Activated CD4-positive, alpha-beta T cell treated with anti-CD3 and anti-CD28 coated beads for 36 hours (primary cell): ENCODE measurements at regions of chr4 and their contacts with region 1.

Region 1: GRCh38 chr4:89482248-89482647 is 174.6 kb upstream of the GPRIN3 start:
- DNase-seq: no peak
- ATAC-seq: peak; percentile 80
- H3K4me3 Mint-ChIP-seq: no peak overlapping the region
- H3K27ac Mint-ChIP-seq: no peak overlapping the region
- H3K4me1 Mint-ChIP-seq: peaks cover 4% of the 10 kb centered on the region
- H3K27me3 Mint-ChIP-seq: peaks cover 3% of the 10 kb centered on the region

Region 2: GRCh38 chr4:89509708-89510281 is 27.5 kb after region 1 on chr4:
- CTCF ChIA-PET with region 1: interaction called, 3 read pairs
- POLR2A ChIA-PET with region 1: no interaction called
- intact Hi-C with region 1: loop called in 1 of 2 experiments (anchors 2 kb)
- DNase-seq: peak; percentile 26
- ATAC-seq: peak; percentile 99
- H3K4me3 Mint-ChIP-seq: no peak overlapping the region
- H3K27ac Mint-ChIP-seq: no peak overlapping the region
- H3K4me1 Mint-ChIP-seq: peaks cover 16% of the 10 kb centered on the region
- H3K27me3 Mint-ChIP-seq: peaks cover 14% of the 10 kb centered on the region

Region 3: DNA sequence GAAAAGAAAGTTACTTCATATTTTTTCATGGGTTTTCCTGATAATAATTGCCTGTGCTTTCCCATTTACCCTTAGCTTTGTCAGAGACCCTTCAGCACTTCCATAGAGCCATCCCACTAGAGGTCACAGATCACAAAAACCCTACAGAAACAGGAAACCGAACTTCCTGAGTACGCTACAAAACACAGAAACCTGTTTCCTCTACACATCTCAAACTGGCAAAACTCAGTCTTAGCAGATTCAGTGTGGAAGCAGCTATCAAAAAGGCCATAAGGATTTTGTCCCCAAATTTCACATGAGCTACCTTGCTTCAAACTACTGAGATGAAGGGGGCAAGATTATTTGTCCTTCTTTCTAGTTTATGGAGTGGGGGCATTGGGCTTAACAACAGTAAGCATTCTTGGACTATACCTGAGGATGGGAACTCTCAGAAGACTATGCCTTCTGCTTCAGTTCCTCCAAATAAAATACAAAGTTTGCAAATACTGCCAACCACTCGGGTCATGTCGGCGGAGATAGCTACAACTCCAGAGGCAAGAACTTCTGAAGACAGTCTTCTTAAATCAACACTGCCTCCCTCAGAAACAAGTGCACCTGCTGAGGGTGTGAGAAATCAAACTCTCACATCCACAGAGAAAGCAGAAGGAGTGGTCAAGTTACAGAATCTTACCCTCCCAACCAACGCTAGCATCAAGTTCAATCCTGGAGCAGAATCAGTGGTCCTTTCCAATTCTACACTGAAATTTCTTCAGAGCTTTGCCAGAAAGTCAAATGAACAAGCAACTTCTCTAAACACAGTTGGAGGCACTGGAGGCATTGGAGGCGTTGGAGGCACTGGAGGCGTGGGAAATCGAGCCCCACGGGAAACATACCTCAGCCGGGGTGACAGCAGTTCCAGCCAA is 412.7 kb after region 1 on chr4 and contains the start of gene MMRN1:
- CTCF ChIA-PET with region 1: interaction called, 3 read pairs
- POLR2A ChIA-PET with region 1: no interaction called
- intact Hi-C with region 1: loop called (anchors 5 to 10 kb)
- DNase-seq: peak; percentile 22
- ATAC-seq: peak; percentile 53
- H3K4me3 Mint-ChIP-seq: peak within 1 kb of the TSS; percentile 58
- H3K27ac Mint-ChIP-seq: peak within 1 kb of the TSS; percentile 86
- H3K4me1 Mint-ChIP-seq: peaks cover 21% of the 10 kb centered on the region
- H3K27me3 Mint-ChIP-seq: no peaks in the 10 kb centered on the region
- total RNA-seq, gene MMRN1: 0.04 to 0.11 TPM

Region 4: DNA sequence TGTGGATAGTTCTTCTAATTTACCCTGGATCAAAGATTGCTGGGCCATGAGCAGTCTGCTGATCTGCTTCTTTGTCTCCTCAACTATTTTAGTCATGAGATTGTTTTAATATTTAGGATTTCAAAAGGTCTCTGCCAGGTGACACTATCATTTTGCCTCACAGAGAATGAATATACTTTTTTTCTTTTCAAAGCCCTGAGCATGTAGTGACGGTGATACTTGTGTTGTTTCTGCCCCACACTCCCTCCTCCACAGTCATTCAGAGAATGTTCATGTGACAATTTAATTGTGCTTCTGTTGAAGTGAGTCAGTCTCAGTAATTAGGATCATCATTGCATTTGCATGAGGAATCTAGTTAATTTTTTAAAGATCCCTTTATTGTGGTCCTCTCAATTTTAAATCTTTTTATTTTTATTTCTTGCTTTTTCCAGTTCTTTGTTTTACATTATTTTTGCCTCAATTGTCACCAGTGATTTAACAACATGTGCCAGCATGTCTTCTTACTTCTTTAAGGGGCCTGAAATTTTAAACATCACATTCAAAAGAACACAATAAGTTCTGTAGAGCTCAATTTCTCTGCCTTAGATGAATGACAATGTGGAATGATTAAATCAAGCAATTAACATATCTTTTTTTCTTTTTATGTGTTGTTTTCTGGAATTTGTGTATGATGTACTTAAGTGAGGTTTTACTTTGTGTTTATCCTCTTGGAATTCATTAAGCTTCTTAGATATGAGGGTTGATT is 424.7 kb after region 1 on chr4:
- CTCF ChIA-PET with region 1: no interaction called
- POLR2A ChIA-PET with region 1: no interaction called
- intact Hi-C with region 1: loop called in 1 of 2 experiments (anchors 5 kb)
- DNase-seq: no peak
- ATAC-seq: peak; percentile 93
- H3K4me3 Mint-ChIP-seq: no peak overlapping the region
- H3K27ac Mint-ChIP-seq: no peak overlapping the region
- H3K4me1 Mint-ChIP-seq: peaks cover 2% of the 10 kb centered on the region
- H3K27me3 Mint-ChIP-seq: no peaks in the 10 kb centered on the region